Activated T-helper 1 cell treated with anti-CD3 and anti-CD28 coated beads, Interleukin-12 subunit alpha, Interleukin-12 subunit beta, Interleukin-2, Interleukin-4 antibody, amounts not matched to agents 30 ng/mL and 10 ng/mL and 1 ng/mL, durations not matched to agents 14 hours and 24 hours and 36 hours (primary cell): ENCODE measurements at regions of chr1 and their contacts with region 1.

Region 1: DNA sequence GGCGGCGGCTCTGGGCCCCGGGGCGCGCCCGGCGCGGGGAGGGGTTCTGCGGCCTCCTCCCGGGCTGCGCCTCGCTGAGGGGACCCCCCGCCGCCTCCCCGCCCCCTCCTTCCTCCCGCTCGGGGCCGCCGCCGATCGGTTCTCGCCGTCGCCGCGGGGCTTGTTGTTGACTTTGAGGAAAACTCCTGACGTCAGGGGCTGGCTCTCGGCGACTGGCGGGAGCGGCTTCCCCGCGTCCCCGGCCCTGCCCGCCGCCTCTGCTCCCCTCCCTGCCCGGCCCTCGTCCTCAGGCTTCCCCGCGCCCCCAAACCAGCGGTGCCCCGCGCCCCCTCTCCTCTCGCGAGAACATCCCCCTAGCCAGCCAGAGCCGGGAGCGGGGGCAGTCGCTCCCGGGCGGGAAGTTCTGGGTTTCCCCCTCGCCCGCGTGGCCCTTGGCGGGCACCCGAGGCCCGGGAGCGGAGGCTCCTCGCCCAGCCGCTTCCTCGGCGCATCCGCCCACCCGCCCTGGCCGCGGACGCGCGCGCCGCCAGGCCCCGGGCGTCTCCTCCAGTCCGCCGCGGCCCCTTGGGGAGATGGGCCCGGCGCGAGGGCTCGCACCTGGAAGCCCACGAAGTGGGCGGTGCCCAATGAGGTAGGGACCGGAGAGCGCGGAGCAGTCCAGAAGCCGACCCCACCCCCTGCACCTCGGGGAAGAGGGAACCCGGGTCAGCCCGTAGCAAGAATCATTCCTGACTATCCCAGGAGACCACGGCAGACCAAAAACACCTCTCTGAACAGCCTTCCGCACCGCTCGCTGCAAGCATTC is 611 bp upstream of the AKT3 start:
- DNase-seq: peak; percentile 74
- H3K4me3 Mint-ChIP-seq: peak overlapping the region; percentile 87
- H3K27ac Mint-ChIP-seq: peak overlapping the region; percentile 84
- H3K4me1 Mint-ChIP-seq: peaks cover 20% of the 10 kb centered on the region
- H3K27me3 Mint-ChIP-seq: peaks cover 37% of the 10 kb centered on the region

Region 2: DNA sequence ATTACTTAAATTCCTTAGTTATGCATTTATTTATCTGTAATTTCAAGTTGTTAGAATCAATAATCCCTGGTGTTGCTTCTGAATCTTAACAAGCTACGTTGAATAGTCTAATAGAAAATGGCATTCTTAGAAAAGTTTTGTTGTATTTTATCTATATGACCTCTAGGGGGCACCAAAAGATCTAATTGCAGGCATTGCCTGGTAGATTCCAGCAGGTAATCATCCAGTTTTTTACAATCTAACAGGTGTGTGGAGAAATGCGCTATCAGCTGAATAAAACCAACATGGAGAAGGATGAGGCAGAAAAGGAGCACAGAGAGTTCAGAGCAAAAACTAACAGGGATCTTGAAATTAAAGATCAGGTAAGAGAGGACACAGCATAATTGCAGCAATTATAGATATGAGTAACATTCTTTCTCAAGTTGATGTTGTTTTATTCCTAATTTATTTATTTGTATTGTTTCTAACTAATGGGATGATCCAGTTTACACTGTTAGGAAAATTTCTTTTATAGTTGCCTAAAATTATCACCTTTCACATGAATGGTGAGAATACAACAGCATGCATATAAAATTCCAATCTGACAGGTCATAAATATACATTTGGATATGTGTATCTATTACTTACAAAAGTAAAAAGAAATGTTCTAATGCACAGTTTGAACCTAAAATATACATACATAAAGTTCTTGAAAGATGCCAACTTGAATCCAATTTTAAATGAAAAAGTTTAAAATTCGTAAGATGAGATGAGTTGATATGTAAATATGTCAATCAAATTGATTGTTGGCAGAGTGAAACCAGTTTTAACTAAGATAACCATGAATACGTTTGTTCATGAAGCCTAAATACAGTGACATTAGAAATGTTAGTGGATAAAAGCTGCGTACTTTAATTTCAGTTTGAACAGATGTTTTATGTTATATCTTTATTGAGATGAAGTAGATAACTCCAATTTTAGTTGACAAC is 506.4 kb before region 1 on chr1:
- intact Hi-C with region 1: loop called (anchors 5 kb)
- DNase-seq: no peak
- H3K4me3 Mint-ChIP-seq: no peak overlapping the region
- H3K27ac Mint-ChIP-seq: no peak overlapping the region
- H3K4me1 Mint-ChIP-seq: peaks cover 5% of the 10 kb centered on the region
- H3K27me3 Mint-ChIP-seq: no peaks in the 10 kb centered on the region

Region 3: DNA sequence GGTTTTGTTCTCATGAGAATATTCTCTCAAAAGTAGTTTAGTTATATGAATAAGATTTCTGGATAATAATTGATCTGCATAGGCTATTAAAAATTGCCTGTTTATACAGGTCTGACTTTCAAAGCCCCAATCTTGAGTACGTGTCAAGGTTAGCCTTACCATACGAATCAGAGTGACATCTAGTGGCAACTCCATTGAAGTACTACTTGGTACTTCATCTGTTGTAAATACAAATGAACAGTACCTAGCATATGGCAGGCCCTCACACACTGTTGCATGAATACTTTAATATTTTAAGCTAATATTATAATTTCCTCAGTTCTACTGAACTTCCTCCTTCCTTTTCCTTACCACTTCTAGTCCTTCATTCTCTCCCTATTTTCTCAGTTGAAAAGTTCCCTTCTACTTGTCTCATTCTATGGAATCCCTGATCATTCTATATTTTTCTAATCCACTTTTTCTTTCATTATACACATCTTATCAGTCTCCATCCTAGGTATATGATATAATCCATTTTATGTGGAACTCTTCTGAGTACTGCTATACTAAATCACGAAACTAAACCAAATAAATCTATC is 101.9 kb before region 1 on chr1:
- intact Hi-C with region 1: loop called (anchors 5 kb)
- DNase-seq: no peak
- H3K4me3 Mint-ChIP-seq: no peak overlapping the region
- H3K27ac Mint-ChIP-seq: no peak overlapping the region
- H3K4me1 Mint-ChIP-seq: no peaks in the 10 kb centered on the region
- H3K27me3 Mint-ChIP-seq: no peaks in the 10 kb centered on the region

Region 4: DNA sequence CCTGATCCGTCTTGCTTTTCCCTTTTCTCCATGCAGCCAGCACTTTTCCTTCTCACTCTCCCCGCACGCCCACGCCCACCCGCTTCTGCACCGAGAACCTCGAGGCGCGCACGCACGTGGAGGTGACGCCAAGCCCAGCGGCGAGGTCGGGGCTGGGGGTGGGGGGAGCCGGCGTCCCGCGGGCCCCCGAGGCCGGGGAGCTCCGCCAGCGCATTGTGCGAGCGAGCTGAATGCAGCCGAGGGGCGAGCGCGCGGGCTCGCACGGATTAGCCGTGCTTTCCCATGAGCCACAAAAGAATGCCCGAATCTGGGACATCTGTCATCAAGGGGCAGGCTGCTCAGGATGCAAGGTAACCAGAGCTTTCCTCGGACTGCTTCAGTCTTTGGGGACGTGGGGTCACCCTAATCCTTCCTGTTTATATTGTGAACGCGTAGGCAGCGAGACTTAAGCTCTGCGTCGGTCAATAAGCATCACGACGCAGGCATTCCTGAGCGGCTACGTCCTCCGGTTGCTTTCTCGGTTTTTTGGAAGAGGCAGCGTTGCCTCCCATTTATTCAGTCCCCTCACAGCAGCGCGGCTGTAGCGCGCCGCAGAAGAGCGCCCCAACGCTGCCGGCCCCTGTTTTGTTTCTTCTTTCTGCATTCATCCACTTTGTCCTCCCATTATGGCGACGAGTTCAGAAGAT is 66.7 kb after region 1 on chr1:
- intact Hi-C with region 1: loop called (anchors 5 kb)
- DNase-seq: no peak
- H3K4me3 Mint-ChIP-seq: peak overlapping the region; percentile 85
- H3K27ac Mint-ChIP-seq: peak overlapping the region; percentile 11
- H3K4me1 Mint-ChIP-seq: peaks cover 22% of the 10 kb centered on the region
- H3K27me3 Mint-ChIP-seq: peaks cover 52% of the 10 kb centered on the region

Region 5: GRCh38 chr1:244137725-244138124 is 287.1 kb after region 1 on chr1:
- intact Hi-C with region 1: no loop called
- DNase-seq: no peak
- H3K4me3 Mint-ChIP-seq: peak overlapping the region; percentile 58
- H3K27ac Mint-ChIP-seq: no peak overlapping the region
- H3K4me1 Mint-ChIP-seq: peaks cover 12% of the 10 kb centered on the region
- H3K27me3 Mint-ChIP-seq: peaks cover 18% of the 10 kb centered on the region

Region 6: DNA sequence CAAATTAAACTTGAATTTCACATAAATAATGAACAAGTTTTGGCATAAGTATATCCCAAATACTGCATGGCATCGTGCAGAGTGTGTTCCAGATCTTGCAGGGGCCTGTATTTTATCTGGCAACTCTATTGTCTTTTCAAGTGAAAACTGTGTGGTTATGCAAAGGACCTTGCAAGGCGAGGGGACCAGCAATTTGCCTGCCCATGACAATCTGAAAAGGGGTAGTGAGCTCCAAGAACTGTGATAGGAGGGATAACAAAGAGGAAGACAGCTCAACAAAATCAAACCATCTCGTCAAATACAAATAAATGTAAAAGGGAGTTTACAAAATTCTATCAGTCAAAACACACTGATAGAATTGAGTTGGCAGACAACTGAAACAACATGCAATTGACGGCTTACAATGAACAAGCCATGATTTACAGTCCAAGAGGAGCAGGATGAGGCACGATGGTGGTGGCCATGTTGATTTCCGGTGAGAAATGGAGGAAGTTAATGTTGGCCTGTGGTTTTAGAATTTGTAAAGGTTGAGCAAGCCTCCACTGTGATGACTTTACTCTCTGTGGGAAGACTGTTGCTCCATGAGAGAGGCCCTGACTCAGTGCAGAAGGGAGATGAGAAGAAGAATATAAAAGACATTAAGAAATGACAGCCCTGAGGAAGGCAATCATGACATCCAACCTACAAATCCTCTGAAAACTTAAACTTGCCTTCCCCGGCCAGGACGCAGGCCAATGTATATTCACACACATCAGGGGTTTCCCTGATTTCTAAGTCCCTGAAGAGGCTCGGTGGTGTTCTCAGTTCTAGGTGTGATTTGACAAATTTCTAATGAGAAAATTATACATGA is 468.9 kb after region 1 on chr1:
- intact Hi-C with region 1: loop called (anchors 2 kb)
- DNase-seq: peak; percentile 59
- H3K4me3 Mint-ChIP-seq: peak overlapping the region; percentile 62
- H3K27ac Mint-ChIP-seq: peak overlapping the region; percentile 89
- H3K4me1 Mint-ChIP-seq: peaks cover 54% of the 10 kb centered on the region
- H3K27me3 Mint-ChIP-seq: peaks cover 1% of the 10 kb centered on the region

Region 7: GRCh38 chr1:244835276-244836134 is 984.9 kb after region 1 on chr1 and contains the start of gene COX20:
- intact Hi-C with region 1: loop called (anchors 5 kb)
- DNase-seq: peak; percentile 85
- H3K4me3 Mint-ChIP-seq: peak within 1 kb of the TSS; percentile 96
- H3K27ac Mint-ChIP-seq: peak within 1 kb of the TSS; percentile 99
- H3K4me1 Mint-ChIP-seq: peaks cover 56% of the 10 kb centered on the region
- H3K27me3 Mint-ChIP-seq: no peaks in the 10 kb centered on the region
- total RNA-seq, gene COX20: 27.4 and 27.6 TPM in 2 replicates